GM13977 (cell line): ENCODE measurements at regions of chr2 and their contacts with region 1.

Region 1: DNA sequence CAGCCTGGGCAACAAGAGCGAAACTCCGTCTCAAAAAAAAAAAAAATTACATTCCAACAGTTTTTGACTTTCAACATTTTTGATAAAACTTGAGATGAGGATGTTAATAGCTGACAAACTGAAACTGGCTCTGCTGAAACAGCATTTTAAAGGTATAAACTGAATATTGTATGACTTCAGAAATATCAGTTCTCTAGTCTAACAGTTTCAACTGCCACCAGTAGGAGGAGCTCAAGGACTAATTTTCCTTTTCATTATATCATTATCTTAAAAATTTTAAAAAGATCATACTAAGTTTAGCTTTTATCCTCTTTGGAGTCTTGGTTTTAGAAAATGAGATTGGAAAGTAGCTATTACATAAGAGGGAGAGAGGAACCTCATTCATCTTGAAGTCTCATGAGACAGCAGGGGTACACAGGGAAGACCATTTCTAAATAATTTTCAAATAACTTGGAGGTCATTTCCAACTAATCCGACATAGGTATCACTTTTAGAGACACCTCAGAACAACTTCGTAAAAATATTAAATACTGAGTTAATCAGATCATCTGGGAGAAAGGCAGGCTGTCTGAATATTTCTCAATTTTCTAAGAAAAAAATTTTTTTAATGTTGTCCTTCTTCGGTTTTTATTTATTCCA is 37.6 kb upstream of the MCM6 start:
- DNase-seq: peak; percentile 41
- CTCF ChIP-seq: peak; percentile 70

Region 2: GRCh38 chr2:135812907-135813502 is 100.8 kb before region 1 on chr2:
- in situ Hi-C with region 1: no loop called
- DNase-seq: no peak
- CTCF ChIP-seq: no peak

Region 3: DNA sequence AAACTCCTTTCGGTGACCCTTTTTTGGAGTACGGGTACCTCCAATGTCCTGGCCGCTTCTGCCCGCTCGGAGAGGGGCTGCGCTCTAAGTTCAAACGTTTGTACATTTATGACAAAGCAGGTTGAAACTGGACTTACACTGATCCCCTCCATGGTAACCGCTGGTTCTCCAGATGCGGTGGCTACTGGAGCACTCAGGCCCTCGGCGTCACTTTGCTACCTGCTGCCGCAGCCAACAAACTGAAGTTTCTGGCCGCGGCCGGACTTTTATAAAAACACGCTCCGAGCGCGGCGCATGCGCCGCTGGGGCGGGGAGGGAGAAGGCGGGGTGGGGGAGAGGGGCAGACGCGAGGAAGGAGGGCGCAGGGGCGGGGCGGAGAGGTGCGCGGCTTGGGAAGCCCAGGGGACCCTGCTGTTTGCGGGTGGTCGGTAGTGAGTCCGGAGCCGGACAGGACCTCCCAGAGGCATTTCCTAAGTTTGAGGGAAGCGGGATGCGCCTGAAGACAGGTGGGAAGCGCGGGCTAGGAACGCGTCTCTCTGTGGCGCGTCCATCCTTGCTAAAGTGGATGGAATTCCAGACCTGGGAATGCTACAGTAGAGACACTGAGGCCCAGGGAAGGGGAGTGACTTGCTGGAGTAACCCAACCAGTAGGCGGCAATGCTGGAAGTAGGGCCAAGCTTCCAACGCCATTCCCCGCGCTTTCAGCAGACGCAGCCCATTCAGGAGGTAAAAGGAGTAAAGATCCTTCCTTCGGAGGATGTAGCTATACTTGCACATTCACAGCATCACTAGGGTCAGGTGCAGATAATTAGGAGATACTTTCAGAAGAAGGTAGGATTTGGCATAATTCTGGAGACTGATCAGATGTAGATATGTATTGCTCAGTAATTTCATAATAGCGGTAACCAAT is 204.3 kb after region 1 on chr2 and contains the start of gene CXCR4:
- in situ Hi-C with region 1: loop called (anchors 25 kb)
- DNase-seq: peak; percentile 90
- CTCF ChIP-seq: no peak

Region 4: DNA sequence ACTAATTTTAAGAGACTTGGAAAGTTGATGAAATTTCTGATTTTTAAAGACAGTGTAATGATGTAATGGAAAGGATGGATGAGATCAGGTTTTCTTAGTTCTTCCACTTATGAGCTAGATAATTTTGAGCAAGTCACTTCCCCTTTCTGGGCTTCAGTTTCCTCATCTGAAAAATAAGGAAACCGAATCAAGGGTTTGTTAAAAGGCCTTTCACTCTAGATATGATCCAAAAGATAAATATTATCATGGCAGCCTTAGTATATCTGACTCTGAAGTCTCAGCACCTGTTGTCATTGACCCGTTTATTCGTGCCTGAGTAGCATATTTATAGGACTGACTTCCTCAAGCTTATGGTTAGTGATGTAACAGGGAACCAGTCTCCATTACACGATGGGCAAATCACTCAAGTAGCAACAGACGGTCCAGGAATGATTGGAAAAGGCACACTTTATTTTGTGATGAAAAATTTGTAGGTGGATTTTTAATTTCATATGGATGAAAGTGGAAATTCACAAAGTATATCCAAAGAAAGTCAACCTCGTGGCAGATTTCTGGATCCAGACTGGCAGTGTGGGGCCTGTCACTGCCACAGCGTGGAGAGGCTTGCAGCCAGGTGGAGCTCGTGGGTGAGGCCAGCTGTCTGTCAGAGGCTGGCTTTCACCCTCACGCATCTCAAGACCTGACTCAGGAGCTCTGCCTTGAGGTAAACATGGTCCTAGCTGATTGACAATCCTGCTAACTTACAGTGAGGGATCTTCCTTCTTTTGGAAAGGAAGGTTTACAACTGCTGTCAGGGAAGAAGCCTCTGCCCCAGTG is 342.0 kb after region 1 on chr2:
- in situ Hi-C with region 1: no loop called
- DNase-seq: peak; percentile 42
- CTCF ChIP-seq: peak; percentile 35

Region 5: GRCh38 chr2:136628490-136628889 is 714.6 kb after region 1 on chr2:
- in situ Hi-C with region 1: no loop called
- DNase-seq: no peak
- CTCF ChIP-seq: no peak